H1 (cell line): ENCODE measurements at regions of chr10 and their contacts with region 1.

Region 1: DNA sequence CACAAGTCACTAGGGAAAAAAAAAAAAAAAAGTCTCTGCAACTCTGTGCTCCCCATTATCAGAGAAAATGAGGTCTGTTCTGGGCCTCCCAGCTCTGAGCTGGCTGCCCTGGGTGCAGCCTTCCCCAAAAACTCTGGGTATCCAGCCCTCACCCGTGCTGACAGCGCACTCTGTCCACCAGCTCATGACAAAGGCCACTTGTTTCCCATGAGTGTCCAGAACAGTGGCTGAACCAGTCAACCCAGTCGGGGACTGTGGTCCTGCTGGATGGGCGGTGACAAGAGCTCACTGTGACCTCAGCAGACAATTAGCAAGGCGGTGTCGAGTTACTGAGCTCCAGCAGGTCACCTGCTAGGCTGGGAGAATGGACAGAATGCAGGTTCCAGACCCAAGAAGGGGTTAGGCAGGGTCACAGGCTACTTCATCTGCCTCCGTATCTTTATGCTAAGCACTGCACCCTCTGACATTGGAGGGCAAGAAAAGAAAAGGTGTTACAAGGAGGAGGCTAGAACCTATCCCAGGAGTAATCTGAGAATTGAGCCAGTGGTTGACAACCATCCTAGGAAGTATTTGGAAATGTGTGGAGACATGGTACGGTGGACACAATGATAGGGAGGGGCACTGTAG is 37.2 kb downstream of the DLG5 start:
- DNase-seq: no peak
- H3K4me3 ChIP-seq: peak overlapping the region in 2 of 4 experiments; percentile 7 to 24; a peak in 2 of 8 replicates
- H3K27ac ChIP-seq: peak overlapping the region; percentile 28; the same call in 1 of the 2 replicates
- H3K4me1 ChIP-seq: peaks cover 28 to 51% (median 31%) of the 10 kb centered on the region in 4 experiments
- H3K27me3 ChIP-seq: no peaks in the 10 kb centered on the region
- CTCF ChIP-seq: no peak
- EP300 ChIP-seq: no peak
- POLR2A ChIP-seq: no peak
- RAD21 ChIP-seq: no peak

Region 2: GRCh38 chr10:77675347-77675746 is 214.0 kb before region 1 on chr10:
- CTCF ChIA-PET with region 1: no interaction called
- POLR2A ChIA-PET with region 1: no interaction called
- DNase-seq: no peak
- H3K4me3 ChIP-seq: no peak overlapping the region
- H3K27ac ChIP-seq: no peak overlapping the region
- H3K4me1 ChIP-seq: peaks cover 0 to 6% (median 0%) of the 10 kb centered on the region in 4 experiments; a peak in 1 of 7 replicates
- H3K27me3 ChIP-seq: no peaks in the 10 kb centered on the region
- CTCF ChIP-seq: no peak
- EP300 ChIP-seq: no peak
- POLR2A ChIP-seq: no peak
- RAD21 ChIP-seq: no peak

Region 3: GRCh38 chr10:77837240-77837924 is 52.0 kb before region 1 on chr10:
- CTCF ChIA-PET with region 1: interaction called, 19 read pairs
- POLR2A ChIA-PET with region 1: no interaction called
- DNase-seq: peak in 1 of 2 experiments; percentile 83
- H3K4me3 ChIP-seq: no peak overlapping the region
- H3K27ac ChIP-seq: peak overlapping the region; percentile 52; the same call in 1 of the 2 replicates
- H3K4me1 ChIP-seq: peaks cover 3 to 7% (median 4%) of the 10 kb centered on the region in 4 experiments
- H3K27me3 ChIP-seq: no peaks in the 10 kb centered on the region
- CTCF ChIP-seq: peak; percentile 47 to 69 (median 64)
- EP300 ChIP-seq: no peak
- POLR2A ChIP-seq: no peak
- RAD21 ChIP-seq: peak; percentile 35 to 59; a peak in 3 of 4 replicates

Region 4: DNA sequence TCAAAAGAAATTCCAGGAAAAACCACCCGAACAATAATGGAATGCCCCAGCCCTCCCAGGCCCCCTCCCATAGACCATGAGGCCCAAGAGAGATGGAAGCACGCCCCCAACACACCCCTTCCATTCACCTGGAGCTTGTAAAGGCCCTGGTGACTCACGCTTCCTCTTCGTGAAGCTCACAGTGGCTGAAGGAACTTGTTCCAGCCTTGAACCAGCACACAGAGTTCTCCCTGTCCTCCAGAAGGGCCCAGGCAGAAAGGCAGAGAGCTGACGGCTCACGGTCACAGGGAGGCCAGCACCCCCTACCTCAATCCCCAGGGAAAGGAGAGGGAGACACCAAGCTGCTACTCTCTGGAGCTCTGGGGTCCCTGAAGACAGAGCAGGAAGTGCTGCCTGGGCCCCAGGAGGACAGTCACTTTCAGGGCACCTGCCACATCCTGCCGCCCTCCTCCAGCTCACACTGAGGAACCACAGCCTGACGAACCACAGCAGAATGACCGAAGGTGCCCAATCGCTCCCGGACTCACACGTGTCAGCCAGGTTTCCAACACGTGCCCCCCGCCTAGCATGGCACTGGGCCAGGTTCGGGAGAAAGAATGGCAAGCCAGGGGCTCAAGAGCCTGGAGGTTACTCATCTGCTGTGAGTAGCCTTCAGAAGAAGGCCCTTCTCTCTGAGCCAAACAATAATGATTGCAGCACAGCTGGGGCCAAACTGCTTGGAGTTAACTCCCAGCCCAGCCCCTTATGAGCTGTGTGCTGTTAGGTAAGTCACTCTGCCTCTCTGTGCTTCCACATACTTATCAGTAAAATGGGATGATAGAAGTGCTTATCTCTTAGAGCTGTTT is 15.6 kb before region 1 on chr10:
- CTCF ChIA-PET with region 1: interaction called, 169 read pairs
- POLR2A ChIA-PET with region 1: interaction called, 17 read pairs
- DNase-seq: no peak
- H3K4me3 ChIP-seq: no peak overlapping the region
- H3K27ac ChIP-seq: no peak overlapping the region
- H3K4me1 ChIP-seq: peaks cover 7 to 34% (median 18%) of the 10 kb centered on the region in 4 experiments
- H3K27me3 ChIP-seq: no peaks in the 10 kb centered on the region
- CTCF ChIP-seq: no peak
- EP300 ChIP-seq: no peak
- POLR2A ChIP-seq: no peak
- RAD21 ChIP-seq: no peak

Region 5: DNA sequence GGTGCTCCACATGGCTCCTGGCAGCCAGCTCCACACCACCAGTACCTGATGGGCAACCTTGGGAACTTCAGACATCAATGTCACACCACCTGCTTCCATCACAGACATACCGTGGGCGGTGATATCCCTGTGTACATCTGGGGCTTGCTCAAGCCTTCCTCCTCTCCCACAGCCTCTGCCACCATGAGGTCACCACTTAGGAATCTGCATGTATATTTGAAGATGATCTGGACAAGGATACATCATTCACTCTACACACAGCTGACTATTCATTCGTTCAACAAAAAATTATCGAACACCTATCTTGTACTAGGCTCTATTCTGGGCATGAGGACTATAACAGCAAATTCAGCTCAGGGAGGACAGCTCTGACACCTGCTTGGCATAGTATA is 30.3 kb after region 1 on chr10:
- CTCF ChIA-PET with region 1: interaction called, 36 read pairs
- POLR2A ChIA-PET with region 1: interaction called, 4 read pairs
- DNase-seq: no peak
- H3K4me3 ChIP-seq: no peak overlapping the region
- H3K27ac ChIP-seq: no peak overlapping the region
- H3K4me1 ChIP-seq: peaks cover 0 to 12% (median 4%) of the 10 kb centered on the region in 4 experiments; a peak in 5 of 7 replicates
- H3K27me3 ChIP-seq: no peaks in the 10 kb centered on the region
- CTCF ChIP-seq: no peak
- EP300 ChIP-seq: no peak
- POLR2A ChIP-seq: no peak
- RAD21 ChIP-seq: no peak

Region 6: DNA sequence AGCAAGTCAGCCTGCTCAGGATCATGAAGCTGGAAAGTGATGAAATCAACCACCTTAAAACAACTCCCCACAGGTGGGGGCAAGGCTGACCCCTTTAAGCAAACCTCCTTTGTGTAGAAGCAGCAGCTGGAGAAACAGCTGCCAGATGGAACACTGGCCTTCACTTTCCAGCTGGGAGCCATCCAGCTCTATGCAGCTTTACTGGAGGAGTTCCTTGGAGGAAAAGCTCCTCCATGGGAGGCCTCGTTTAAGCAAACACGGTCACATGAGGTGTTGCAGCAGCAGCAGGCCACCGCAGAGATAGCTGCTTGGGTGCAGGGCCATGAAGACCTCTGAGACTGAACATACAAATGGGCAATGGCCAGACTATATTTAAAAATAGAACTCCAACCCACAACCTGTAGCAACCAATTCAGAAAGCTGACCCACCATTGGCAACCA is 50.2 kb after region 1 on chr10:
- CTCF ChIA-PET with region 1: interaction called, 16 read pairs
- POLR2A ChIA-PET with region 1: interaction called, 3 read pairs
- DNase-seq: no peak
- H3K4me3 ChIP-seq: no peak overlapping the region
- H3K27ac ChIP-seq: no peak overlapping the region
- H3K4me1 ChIP-seq: peaks cover 0 to 8% (median 2%) of the 10 kb centered on the region in 4 experiments; a peak in 4 of 7 replicates
- H3K27me3 ChIP-seq: no peaks in the 10 kb centered on the region
- CTCF ChIP-seq: no peak
- EP300 ChIP-seq: no peak
- POLR2A ChIP-seq: no peak
- RAD21 ChIP-seq: no peak

Region 7: DNA sequence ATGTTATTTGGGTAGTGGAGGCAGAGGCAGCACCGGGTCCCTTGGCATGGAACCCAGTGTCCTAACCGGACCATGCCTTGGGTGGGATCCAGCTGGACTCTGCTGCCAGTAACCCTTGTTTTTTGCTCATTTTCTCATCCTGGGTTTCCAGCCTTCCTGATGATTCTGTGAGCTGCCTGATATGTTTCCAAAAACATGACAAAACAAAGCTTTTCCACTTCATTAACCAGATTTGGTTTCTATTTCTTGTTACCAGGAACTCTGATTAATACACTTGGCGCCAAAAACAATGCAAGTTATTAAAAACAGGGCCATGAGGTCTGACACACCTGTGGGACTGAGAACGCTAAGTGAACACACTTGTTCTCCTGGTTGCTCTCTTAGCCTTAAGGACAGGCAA is 70.0 kb after region 1 on chr10:
- CTCF ChIA-PET with region 1: interaction called, 11 read pairs
- POLR2A ChIA-PET with region 1: no interaction called
- DNase-seq: no peak
- H3K4me3 ChIP-seq: no peak overlapping the region
- H3K27ac ChIP-seq: no peak overlapping the region
- H3K4me1 ChIP-seq: peaks cover 0 to 6% (median 0%) of the 10 kb centered on the region in 4 experiments; a peak in 1 of 7 replicates
- H3K27me3 ChIP-seq: no peaks in the 10 kb centered on the region
- CTCF ChIP-seq: no peak
- EP300 ChIP-seq: no peak
- POLR2A ChIP-seq: no peak
- RAD21 ChIP-seq: no peak